Mammary epithelial cell (primary cell): ENCODE measurements at regions of chr3 and their contacts with region 1.

Region 1: DNA sequence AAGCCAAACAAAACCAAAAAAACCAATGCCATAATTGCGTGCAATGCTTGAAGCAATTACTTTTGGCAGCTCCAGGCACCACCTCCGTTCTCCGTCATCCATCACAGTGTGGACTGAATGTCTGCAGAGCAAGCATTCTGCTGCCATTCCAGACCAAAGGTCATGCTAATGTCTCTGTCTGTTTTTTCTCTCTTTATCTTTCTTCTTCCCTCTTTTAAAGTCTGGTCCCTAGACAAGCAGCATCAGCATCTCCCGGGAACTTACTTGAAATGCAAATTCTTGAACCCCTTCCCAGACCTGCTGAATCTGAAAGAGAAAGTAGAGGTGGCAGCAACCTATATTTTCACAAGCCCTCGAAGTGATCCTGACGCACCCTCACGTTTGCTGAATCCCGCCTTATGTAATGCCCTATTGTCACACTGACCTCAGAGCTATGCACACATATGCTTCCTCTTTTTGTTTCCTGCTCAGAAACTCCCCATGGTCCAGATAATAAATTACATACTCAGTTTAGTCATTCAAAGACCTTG is 297.3 kb upstream of the PROK2 start:
- DNase-seq: no peak
- H3K4me3 ChIP-seq: no peak overlapping the region
- H3K27ac ChIP-seq: no peak overlapping the region
- H3K4me1 ChIP-seq: no peaks in the 10 kb centered on the region
- H3K27me3 ChIP-seq: peaks cover 5% of the 10 kb centered on the region
- CTCF ChIP-seq: no peak

Region 2: DNA sequence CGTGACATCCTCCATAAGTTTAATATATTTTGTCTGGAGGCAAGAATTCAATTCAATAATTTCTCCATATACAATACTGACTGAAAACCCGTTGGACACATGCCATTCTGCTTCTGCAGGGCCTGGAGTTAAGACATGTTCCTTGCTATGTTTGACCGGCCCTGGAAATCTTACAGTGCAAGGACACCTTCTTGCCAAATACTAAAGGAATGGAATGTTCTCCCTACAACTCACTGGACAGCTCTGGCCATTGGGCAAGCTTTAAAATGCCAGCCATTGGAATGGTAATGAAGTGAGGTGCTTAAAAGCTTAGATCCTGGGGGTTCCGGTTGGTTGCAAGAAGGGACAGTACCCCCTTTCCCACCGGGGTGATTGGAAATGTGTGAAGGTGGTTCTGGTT is 32.5 kb after region 1 on chr3:
- CTCF ChIA-PET with region 1: no interaction called
- dilution Hi-C with region 1: loop called (anchors 5 kb)
- in situ Hi-C with region 1: no loop called
- intact Hi-C with region 1: no loop called
- DNase-seq: no peak
- H3K4me3 ChIP-seq: no peak overlapping the region
- H3K27ac ChIP-seq: no peak overlapping the region
- H3K4me1 ChIP-seq: no peaks in the 10 kb centered on the region
- H3K27me3 ChIP-seq: no peaks in the 10 kb centered on the region
- CTCF ChIP-seq: no peak